ENCODE measurements at regions of chr19 and their contacts with region 1.

Region 1: DNA sequence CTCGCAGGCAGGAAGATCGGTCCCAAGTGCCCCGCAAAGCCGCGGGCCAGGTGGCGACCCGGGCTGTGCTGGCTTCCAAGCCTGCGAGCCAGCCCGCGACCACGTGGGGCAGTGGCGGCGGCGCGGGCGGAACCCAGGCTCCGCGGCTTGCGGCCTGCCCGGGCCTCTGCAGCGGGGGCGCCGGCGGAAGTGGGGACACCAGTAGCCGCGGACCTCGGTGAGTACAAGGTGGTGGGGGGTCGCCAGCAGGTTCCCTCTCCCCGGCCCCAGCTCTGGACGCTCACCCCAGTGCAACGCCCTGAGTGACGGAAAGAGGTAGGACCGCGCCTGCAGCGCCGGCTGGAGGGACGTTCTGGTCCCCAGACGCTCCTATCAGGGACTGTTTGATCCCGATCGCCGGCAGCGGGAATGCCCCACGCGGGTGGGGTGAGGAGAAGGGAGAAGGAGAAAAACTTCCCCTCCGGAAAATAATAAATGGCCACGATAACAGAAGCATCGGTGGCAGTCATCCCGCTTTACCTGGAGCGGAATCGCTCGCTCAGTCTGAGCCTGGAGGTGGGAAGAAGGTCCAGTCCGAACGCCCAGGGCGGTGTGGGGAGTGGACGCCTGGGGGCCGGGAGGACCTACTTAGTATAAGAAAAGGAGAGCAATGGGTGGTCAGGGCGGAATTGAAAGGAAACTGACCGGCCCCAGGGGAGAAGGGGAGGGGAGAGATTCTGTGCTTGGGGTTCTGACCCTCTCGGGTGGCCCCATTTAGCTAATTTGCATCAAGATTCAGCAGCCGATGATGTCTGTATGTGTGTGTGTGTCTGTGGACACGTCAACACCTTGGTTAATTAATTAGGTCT is at the start of gene GEMIN7:
- DNase-seq: peak; percentile 82 to 94
- H3K4me3 ChIP-seq: peak within 1 kb of the TSS; percentile 99
- H3K4me3 Mint-ChIP-seq: peak within 1 kb of the TSS; percentile 98
- H3K27ac Mint-ChIP-seq: peak within 1 kb of the TSS; percentile 94
- H3K4me1 ChIP-seq: peaks cover 24% of the 10 kb centered on the region
- H3K4me1 Mint-ChIP-seq: peaks cover 28% of the 10 kb centered on the region
- H3K27me3 ChIP-seq: no peaks in the 10 kb centered on the region
- H3K27me3 Mint-ChIP-seq: no peaks in the 10 kb centered on the region
- CTCF ChIP-seq: peak in 1 of 2 experiments; percentile 28
- total RNA-seq, gene GEMIN7: 45.8 and 49.3 TPM in 2 replicates

Region 2: GRCh38 chr19:45001087-45001739 is 78.1 kb before region 1 on chr19 and contains the start of gene RELB:
- CTCF ChIA-PET with region 1: interaction called, 7 read pairs
- POLR2A ChIA-PET with region 1: no interaction called
- intact Hi-C with region 1: loop called (anchors 5 kb)
- DNase-seq: peak; percentile 94 to 99
- H3K4me3 ChIP-seq: peak within 1 kb of the TSS; percentile 91
- H3K4me3 Mint-ChIP-seq: peak within 1 kb of the TSS; percentile 94
- H3K27ac Mint-ChIP-seq: peak within 1 kb of the TSS; percentile 89
- H3K4me1 ChIP-seq: peaks cover 10% of the 10 kb centered on the region
- H3K4me1 Mint-ChIP-seq: peaks cover 8% of the 10 kb centered on the region
- H3K27me3 ChIP-seq: no peaks in the 10 kb centered on the region
- H3K27me3 Mint-ChIP-seq: no peaks in the 10 kb centered on the region
- CTCF ChIP-seq: no peak
- total RNA-seq, gene RELB: 6.3 and 10.2 TPM in 2 replicates

Region 3: GRCh38 chr19:45092747-45093678 is 13.7 kb after region 1 on chr19 and contains the start of gene PPP1R37:
- CTCF ChIA-PET with region 1: interaction called, 3 read pairs
- POLR2A ChIA-PET with region 1: interaction called, 14 read pairs
- intact Hi-C with region 1: loop called (anchors 1 kb)
- DNase-seq: peak; percentile 96 to 97
- H3K4me3 ChIP-seq: peak within 1 kb of the TSS; percentile 93
- H3K4me3 Mint-ChIP-seq: peak within 1 kb of the TSS; percentile 84
- H3K27ac Mint-ChIP-seq: peak within 1 kb of the TSS; percentile 96
- H3K4me1 ChIP-seq: peaks cover 10% of the 10 kb centered on the region; the same call in 1 of the 2 replicates
- H3K4me1 Mint-ChIP-seq: peaks cover 31% of the 10 kb centered on the region
- H3K27me3 ChIP-seq: no peaks in the 10 kb centered on the region
- H3K27me3 Mint-ChIP-seq: no peaks in the 10 kb centered on the region
- CTCF ChIP-seq: no peak
- total RNA-seq, gene PPP1R37: 42.1 and 47.7 TPM in 2 replicates